Activated T-helper 1 cell treated with anti-CD3 and anti-CD28 coated beads, Interleukin-12 subunit alpha, Interleukin-12 subunit beta, Interleukin-2, Interleukin-4 antibody, amounts not matched to agents 30 ng/mL and 10 ng/mL and 1 ng/mL, durations not matched to agents 14 hours and 24 hours and 36 hours (primary cell): ENCODE measurements at regions of chr19 and their contacts with region 1.

Region 1: DNA sequence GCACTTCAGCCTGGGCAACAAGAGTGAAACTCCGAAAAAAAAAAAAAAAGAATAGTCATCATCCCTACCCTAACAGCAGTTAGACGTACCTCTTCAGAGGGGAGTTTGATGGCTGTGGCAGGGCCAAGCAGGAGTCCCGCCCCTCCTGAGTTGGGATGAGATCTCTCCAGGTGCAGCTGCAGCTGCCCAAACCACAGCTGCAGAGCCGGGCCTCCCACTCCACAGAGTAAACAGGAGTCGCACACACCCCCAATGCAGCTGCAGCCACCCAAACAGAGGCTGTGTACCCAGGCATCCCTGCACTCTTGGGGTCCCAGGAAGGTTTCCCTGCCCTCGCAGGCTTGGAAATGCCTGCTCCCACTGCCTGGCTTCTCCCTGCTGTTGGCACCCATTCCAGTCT is 17.4 kb upstream of the MLLT1 start:
- DNase-seq: no peak
- H3K4me3 Mint-ChIP-seq: no peak overlapping the region
- H3K27ac Mint-ChIP-seq: no peak overlapping the region
- H3K4me1 Mint-ChIP-seq: peaks cover 4% of the 10 kb centered on the region
- H3K27me3 Mint-ChIP-seq: no peaks in the 10 kb centered on the region

Region 2: DNA sequence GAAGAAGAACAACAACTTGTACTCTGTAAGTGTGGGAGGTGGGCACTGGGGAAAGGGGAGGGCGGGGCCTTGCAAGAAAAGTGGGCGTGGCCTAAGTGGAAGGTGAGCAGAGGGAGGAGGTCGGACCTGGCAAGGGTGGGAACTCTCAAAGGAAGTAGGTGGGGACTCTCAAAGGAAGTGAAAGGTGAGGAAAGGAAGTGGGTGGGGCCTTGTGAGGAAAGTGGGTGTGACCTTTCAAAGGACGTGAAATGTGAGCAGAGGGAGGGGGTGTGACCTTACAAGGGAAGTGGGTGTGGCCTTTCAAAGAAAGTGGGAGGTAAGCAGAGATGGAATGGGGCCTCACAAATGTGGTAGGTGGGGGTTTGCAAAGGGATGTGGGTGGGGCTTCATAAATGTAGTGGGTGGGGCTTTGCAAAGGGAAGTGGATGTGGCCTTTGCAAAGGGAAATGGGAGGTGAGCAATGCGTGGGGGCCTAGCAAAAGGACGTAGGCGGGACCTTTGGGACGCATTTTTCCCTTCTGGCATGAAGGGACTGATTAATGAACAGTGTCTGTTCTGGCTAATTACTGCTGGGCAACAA is 135.8 kb before region 1 on chr19:
- intact Hi-C with region 1: loop called (anchors 1 kb)
- DNase-seq: peak; percentile 60
- H3K4me3 Mint-ChIP-seq: peak overlapping the region; percentile 37
- H3K27ac Mint-ChIP-seq: peak overlapping the region; percentile 55
- H3K4me1 Mint-ChIP-seq: peaks cover 11% of the 10 kb centered on the region
- H3K27me3 Mint-ChIP-seq: no peaks in the 10 kb centered on the region

Region 3: DNA sequence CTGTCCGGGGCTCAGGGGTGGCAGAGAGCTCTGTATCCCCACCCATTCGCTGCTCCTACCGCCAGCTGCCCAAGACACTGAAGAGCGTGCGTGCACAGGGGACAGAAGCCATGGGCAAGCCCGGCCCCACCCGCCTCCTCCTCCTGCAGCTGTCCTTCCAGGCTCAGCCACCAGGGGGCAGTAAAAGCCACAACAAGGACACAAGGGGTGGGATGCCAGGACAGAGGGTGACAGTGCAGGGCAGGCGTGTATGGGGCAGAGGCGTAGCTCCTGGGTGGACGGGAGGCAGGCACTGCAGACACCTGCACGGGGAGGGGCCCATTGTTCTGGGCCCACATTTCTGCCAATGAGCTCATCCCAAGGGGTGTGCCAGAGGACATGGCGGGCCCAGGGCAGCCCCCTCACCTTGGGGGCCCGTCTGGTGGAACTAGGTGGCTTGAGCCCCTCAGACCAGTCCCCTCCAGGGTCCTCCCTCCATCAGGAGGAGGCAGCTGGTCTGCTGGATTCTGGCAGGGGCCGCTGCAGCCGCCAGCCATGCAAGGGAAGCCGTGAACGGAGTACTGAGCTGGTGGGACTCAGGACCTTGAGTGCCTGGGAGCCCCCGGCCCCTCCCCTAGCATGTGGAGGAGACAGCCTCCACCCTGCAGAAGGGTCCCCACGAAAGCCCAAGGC is 78.6 kb before region 1 on chr19:
- intact Hi-C with region 1: loop called (anchors 1 kb)
- DNase-seq: peak; percentile 72
- H3K4me3 Mint-ChIP-seq: no peak overlapping the region
- H3K27ac Mint-ChIP-seq: no peak overlapping the region
- H3K4me1 Mint-ChIP-seq: no peaks in the 10 kb centered on the region
- H3K27me3 Mint-ChIP-seq: no peaks in the 10 kb centered on the region